Esophagus squamous epithelium (tissue), 5 donors: ENCODE measurements at regions of chr1 and their contacts with region 1.

Region 1: DNA sequence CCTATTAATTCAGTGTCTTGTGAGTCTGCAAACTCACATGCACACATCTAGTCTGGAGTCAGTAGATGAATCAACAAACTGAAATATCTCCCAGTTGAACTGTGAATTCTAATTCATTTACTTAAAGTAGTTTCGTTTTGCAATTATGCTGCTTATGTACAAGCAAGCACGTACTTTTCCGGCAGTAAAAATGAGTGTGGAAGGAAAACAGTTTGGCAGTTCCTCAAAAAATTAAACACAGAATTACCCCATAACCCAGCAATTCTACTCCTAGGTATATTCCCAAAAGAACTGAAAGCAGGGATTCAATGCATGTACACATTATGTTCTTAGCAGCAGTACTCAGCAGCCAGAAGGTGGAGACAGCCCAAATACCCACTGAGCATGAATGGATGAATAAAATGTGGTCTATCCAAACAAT is 49.3 kb downstream of the GNB1 start:
- DNase-seq: no peak
- H3K4me3 ChIP-seq: no peak overlapping the region
- H3K27ac ChIP-seq: peak overlapping the region in 2 of 4 donors; percentile 39
- H3K4me1 ChIP-seq: peaks cover 17 to 68% (median 30%) of the 10 kb centered on the region in 3 donors
- H3K27me3 ChIP-seq: no peaks in the 10 kb centered on the region
- CTCF ChIP-seq: no peak
- POLR2A ChIP-seq: no peak

Region 2: GRCh38 chr1:1890506-1891348 is 49.1 kb after region 1 on chr1 and contains the start of gene GNB1:
- intact Hi-C with region 1: loop called (anchors 10 kb)
- DNase-seq: no peak
- H3K4me3 ChIP-seq: peak within 1 kb of the TSS; percentile 55 to 95 (median 76)
- H3K27ac ChIP-seq: peak within 1 kb of the TSS; percentile 92 to 99 (median 99)
- H3K4me1 ChIP-seq: peaks cover 32 to 84% (median 58%) of the 10 kb centered on the region in 3 donors
- H3K27me3 ChIP-seq: peaks cover 0 to 7% (median 0%) of the 10 kb centered on the region in 4 donors
- CTCF ChIP-seq: peak in 3 of 6 experiments; percentile 8 to 21 (median 9)
- POLR2A ChIP-seq: peak in 3 of 4 donors; percentile 28 to 86 (median 75)
- total RNA-seq, gene GNB1: 54.3 to 102 (median 74.7) TPM

Region 3: GRCh38 chr1:2189459-2190425 is 348.2 kb after region 1 on chr1:
- intact Hi-C with region 1: no loop called
- DNase-seq: peak; percentile 78
- H3K4me3 ChIP-seq: peak overlapping the region; percentile 39 to 76 (median 52)
- H3K27ac ChIP-seq: peak overlapping the region; percentile 84 to 98 (median 94)
- H3K4me1 ChIP-seq: peaks cover 38 to 76% (median 41%) of the 10 kb centered on the region in 3 donors
- H3K27me3 ChIP-seq: no peaks in the 10 kb centered on the region
- CTCF ChIP-seq: peak in 1 of 6 experiments; percentile 30
- POLR2A ChIP-seq: peak in 3 of 4 donors; percentile 4 to 80 (median 42)